Naive thymus-derived CD4-positive, alpha-beta T cell (primary cell): ENCODE measurements at regions of chr12 and their contacts with region 1.

Region 1: DNA sequence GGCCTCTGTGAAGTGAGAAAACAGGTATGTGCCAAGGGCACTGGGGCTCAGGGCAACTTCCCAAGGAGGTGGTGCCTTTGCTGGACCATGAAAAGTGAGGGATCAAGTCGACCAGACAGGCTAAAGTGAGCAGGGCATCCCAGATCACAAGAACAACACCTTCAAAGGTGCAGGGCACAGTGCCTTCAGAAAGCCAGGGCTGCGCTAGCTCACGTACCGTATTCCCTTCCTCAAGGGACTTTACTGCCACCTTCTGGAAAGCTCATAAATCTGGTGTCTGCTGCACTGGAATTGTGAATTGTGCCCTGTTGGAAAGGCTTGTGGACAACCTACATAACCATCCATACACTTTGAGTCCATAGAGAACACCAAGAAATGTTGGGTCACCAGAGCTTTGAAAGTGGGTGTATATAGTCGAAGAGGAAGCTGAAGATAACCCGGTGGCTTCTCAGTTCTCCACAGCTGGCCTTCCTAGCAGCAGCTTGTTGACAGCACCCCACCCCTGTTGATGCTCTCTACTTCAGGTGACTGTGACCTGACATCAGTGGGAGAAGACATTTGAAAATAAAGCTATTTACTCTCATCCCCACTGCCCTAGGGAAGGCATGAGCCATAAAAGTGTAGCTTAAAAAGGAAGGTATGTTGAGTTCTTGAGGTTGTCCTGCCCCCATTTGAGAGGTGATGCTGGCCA is 24.5 kb downstream of the FIGNL2 start:
- DNase-seq: peak in 5 of 9 donors; percentile 27 to 47 (median 36)
- ATAC-seq: no peak
- H3K4me3 ChIP-seq: no peak overlapping the region
- H3K4me3 Mint-ChIP-seq: peak overlapping the region in 3 of 10 donors; percentile 4 to 17 (median 6)
- H3K27ac ChIP-seq: no peak overlapping the region
- H3K27ac Mint-ChIP-seq: peak overlapping the region in 8 of 9 donors; percentile 16 to 68 (median 54)
- H3K4me1 ChIP-seq: peaks cover 5 to 24% of the 10 kb centered on the region in 2 donors
- H3K4me1 Mint-ChIP-seq: peaks cover 29 to 41% (median 32%) of the 10 kb centered on the region in 7 donors
- H3K27me3 ChIP-seq: no peaks in the 10 kb centered on the region
- H3K27me3 Mint-ChIP-seq: peaks cover 0 to 14% (median 0%) of the 10 kb centered on the region in 5 donors

Region 2: GRCh38 chr12:51521554-51522276 is 302.3 kb before region 1 on chr12:
- CTCF ChIA-PET with region 1: no interaction called
- POLR2A ChIA-PET with region 1: no interaction called
- intact Hi-C with region 1: loop called in 1 of 2 experiments (anchors 1 kb)
- DNase-seq: no peak
- ATAC-seq: no peak
- H3K4me3 ChIP-seq: no peak overlapping the region
- H3K4me3 Mint-ChIP-seq: no peak overlapping the region
- H3K27ac ChIP-seq: no peak overlapping the region
- H3K27ac Mint-ChIP-seq: no peak overlapping the region
- H3K4me1 ChIP-seq: no peaks in the 10 kb centered on the region
- H3K4me1 Mint-ChIP-seq: no peaks in the 10 kb centered on the region
- H3K27me3 ChIP-seq: no peaks in the 10 kb centered on the region
- H3K27me3 Mint-ChIP-seq: no peaks in the 10 kb centered on the region

Region 3: DNA sequence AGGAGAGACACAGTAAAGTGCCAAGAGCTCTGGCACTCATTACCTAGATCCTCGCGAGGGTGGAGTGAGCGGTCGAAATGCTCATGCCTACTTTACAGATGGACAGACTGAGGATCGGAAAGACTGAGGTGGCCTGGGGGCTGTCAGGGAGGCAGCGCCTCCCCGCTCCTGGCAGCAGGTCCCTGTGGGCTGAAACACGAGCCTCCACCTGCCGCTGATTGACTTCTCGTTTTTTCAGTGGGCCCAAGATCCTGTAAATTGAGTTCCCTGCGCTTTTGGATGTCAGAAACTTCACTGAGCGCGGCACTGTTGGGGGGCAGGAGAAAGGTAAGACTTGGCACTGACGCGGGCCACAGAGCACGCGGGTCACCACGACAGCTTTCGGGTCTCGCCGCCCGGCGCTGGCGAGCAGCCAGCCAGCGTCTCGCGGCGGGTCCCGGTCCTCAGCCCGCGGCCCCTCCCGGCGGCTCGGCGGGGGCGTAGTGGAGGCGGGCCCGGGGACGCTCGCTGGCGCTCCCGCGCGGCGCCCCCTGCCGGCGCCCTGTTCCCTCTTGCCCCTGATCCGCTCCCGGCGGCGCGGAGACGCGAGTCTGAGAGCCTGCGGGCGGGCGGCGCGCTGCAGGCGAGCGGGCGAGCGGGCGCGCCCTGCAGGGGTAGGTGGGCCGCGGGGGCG is 233.5 kb before region 1 on chr12:
- CTCF ChIA-PET with region 1: no interaction called
- POLR2A ChIA-PET with region 1: no interaction called
- intact Hi-C with region 1: loop called in 1 of 2 experiments (anchors 5 kb)
- DNase-seq: peak; percentile 53 to 84 (median 72)
- ATAC-seq: peak; percentile 95
- H3K4me3 ChIP-seq: peak overlapping the region; percentile 60
- H3K4me3 Mint-ChIP-seq: peak overlapping the region; percentile 78 to 96 (median 86)
- H3K27ac ChIP-seq: no peak overlapping the region
- H3K27ac Mint-ChIP-seq: peak overlapping the region in 4 of 9 donors; percentile 2 to 39 (median 32)
- H3K4me1 ChIP-seq: peaks cover 6 to 9% of the 10 kb centered on the region in 2 donors
- H3K4me1 Mint-ChIP-seq: peaks cover 9 to 24% (median 20%) of the 10 kb centered on the region in 7 donors
- H3K27me3 ChIP-seq: peaks cover 0 to 12% of the 10 kb centered on the region in 2 donors
- H3K27me3 Mint-ChIP-seq: peaks cover 62 to 70% (median 66%) of the 10 kb centered on the region in 5 donors

Region 4: DNA sequence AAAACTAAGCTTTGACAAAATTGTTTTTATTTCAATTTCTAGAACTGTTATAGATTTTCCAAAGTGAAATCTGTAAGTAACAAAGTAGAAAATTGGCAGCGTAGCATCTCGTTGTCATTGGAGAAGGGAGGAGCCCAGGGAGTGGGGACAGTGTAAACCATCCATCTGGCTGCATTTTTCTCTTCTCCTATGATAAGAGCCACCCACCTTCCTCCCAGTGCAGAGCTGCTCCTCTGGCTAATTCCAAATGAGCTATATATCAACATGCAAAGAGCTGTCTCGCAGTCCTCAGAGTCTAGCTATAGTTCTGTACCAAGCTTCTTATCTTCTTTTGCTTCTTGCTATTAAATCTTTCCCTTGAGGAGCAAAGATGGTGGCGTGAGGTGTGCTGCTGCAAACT is 176.4 kb before region 1 on chr12:
- CTCF ChIA-PET with region 1: no interaction called
- POLR2A ChIA-PET with region 1: no interaction called
- intact Hi-C with region 1: no loop called
- DNase-seq: no peak
- ATAC-seq: no peak
- H3K4me3 ChIP-seq: no peak overlapping the region
- H3K4me3 Mint-ChIP-seq: no peak overlapping the region
- H3K27ac ChIP-seq: no peak overlapping the region
- H3K27ac Mint-ChIP-seq: no peak overlapping the region
- H3K4me1 ChIP-seq: no peaks in the 10 kb centered on the region
- H3K4me1 Mint-ChIP-seq: peaks cover 0 to 1% (median 0%) of the 10 kb centered on the region in 7 donors
- H3K27me3 ChIP-seq: no peaks in the 10 kb centered on the region
- H3K27me3 Mint-ChIP-seq: peaks cover 0 to 12% (median 6%) of the 10 kb centered on the region in 5 donors

Region 5: GRCh38 chr12:51726931-51727330 is 97.1 kb before region 1 on chr12:
- CTCF ChIA-PET with region 1: no interaction called
- POLR2A ChIA-PET with region 1: no interaction called
- intact Hi-C with region 1: no loop called
- DNase-seq: no peak
- ATAC-seq: no peak
- H3K4me3 ChIP-seq: no peak overlapping the region
- H3K4me3 Mint-ChIP-seq: no peak overlapping the region
- H3K27ac ChIP-seq: no peak overlapping the region
- H3K27ac Mint-ChIP-seq: no peak overlapping the region
- H3K4me1 ChIP-seq: no peaks in the 10 kb centered on the region
- H3K4me1 Mint-ChIP-seq: peaks cover 0 to 6% (median under 1%) of the 10 kb centered on the region in 7 donors
- H3K27me3 ChIP-seq: peaks cover 0 to 3% of the 10 kb centered on the region in 2 donors
- H3K27me3 Mint-ChIP-seq: peaks cover 8 to 63% (median 27%) of the 10 kb centered on the region in 5 donors

Region 6: GRCh38 chr12:51879102-51879501 is 55.1 kb after region 1 on chr12:
- CTCF ChIA-PET with region 1: interaction called, 3 read pairs
- POLR2A ChIA-PET with region 1: interaction called, 3 read pairs
- intact Hi-C with region 1: loop called (anchors 1 to 5 kb)
- DNase-seq: no peak
- ATAC-seq: no peak
- H3K4me3 ChIP-seq: no peak overlapping the region
- H3K4me3 Mint-ChIP-seq: no peak overlapping the region
- H3K27ac ChIP-seq: no peak overlapping the region
- H3K27ac Mint-ChIP-seq: no peak overlapping the region
- H3K4me1 ChIP-seq: no peaks in the 10 kb centered on the region
- H3K4me1 Mint-ChIP-seq: peaks cover 0 to 4% (median 0%) of the 10 kb centered on the region in 7 donors
- H3K27me3 ChIP-seq: no peaks in the 10 kb centered on the region
- H3K27me3 Mint-ChIP-seq: peaks cover 0 to 9% (median 0%) of the 10 kb centered on the region in 5 donors

Region 7: DNA sequence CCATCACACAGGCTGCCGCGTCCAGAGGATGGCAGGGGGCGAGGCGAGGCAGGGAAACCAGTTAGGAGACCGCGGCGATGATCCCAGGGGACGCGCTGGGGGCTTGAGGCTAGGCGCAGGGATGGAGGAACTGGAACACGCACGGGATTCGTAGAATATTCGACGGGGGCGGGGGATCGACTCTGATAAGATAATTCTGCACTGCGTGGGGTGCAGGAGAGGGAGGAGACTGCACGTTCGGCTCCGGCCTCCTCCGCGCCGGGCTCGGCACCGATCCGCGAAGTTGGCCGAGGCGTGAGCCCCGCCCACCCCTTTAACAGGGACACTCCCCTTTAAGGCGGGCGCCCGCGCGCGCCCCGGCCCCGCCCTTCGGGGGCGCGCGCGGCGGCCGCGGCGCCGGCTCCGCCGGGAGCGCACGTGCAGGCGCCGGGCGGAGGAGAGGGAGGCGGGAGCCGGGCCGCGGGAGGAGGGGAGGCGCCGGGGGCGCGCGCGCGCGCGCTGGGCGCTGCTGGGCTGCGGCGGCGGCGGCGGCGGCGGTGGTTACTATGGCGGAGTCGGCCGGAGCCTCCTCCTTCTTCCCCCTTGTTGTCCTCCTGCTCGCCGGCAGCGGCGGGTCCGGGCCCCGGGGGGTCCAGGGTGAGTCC is 127.3 kb after region 1 on chr12 and contains the start of gene ACVR1B:
- CTCF ChIA-PET with region 1: no interaction called
- POLR2A ChIA-PET with region 1: interaction called, 4 read pairs
- intact Hi-C with region 1: loop called (anchors 1 to 10 kb)
- DNase-seq: peak; percentile 80 to 93 (median 89)
- ATAC-seq: peak; percentile 97
- H3K4me3 ChIP-seq: peak within 1 kb of the TSS; percentile 70
- H3K4me3 Mint-ChIP-seq: peak within 1 kb of the TSS; percentile 87 to 100 (median 97)
- H3K27ac ChIP-seq: peak within 1 kb of the TSS; percentile 88
- H3K27ac Mint-ChIP-seq: peak within 1 kb of the TSS; percentile 79 to 97 (median 94)
- H3K4me1 ChIP-seq: peaks cover 16 to 20% of the 10 kb centered on the region in 2 donors
- H3K4me1 Mint-ChIP-seq: peaks cover 25 to 49% (median 39%) of the 10 kb centered on the region in 7 donors
- H3K27me3 ChIP-seq: no peaks in the 10 kb centered on the region
- H3K27me3 Mint-ChIP-seq: peaks cover 0 to 66% (median 0%) of the 10 kb centered on the region in 5 donors
- total RNA-seq, gene ACVR1B: 4.9 to 14.8 (median 14.2) TPM